Activated CD4-positive, alpha-beta T cell treated with anti-CD3 and anti-CD28 coated beads for 36 hours (primary cell): ENCODE measurements at regions of chr10 and their contacts with region 1.

Region 1: GRCh38 chr10:45580371-45581215 is 92.0 kb downstream of the ZFAND4 start:
- DNase-seq: peak; percentile 41
- ATAC-seq: peak; percentile 68
- H3K4me3 Mint-ChIP-seq: peak overlapping the region; percentile 76
- H3K27ac Mint-ChIP-seq: peak overlapping the region; percentile 95
- H3K4me1 Mint-ChIP-seq: peaks cover 37% of the 10 kb centered on the region
- H3K27me3 Mint-ChIP-seq: no peaks in the 10 kb centered on the region

Region 2: DNA sequence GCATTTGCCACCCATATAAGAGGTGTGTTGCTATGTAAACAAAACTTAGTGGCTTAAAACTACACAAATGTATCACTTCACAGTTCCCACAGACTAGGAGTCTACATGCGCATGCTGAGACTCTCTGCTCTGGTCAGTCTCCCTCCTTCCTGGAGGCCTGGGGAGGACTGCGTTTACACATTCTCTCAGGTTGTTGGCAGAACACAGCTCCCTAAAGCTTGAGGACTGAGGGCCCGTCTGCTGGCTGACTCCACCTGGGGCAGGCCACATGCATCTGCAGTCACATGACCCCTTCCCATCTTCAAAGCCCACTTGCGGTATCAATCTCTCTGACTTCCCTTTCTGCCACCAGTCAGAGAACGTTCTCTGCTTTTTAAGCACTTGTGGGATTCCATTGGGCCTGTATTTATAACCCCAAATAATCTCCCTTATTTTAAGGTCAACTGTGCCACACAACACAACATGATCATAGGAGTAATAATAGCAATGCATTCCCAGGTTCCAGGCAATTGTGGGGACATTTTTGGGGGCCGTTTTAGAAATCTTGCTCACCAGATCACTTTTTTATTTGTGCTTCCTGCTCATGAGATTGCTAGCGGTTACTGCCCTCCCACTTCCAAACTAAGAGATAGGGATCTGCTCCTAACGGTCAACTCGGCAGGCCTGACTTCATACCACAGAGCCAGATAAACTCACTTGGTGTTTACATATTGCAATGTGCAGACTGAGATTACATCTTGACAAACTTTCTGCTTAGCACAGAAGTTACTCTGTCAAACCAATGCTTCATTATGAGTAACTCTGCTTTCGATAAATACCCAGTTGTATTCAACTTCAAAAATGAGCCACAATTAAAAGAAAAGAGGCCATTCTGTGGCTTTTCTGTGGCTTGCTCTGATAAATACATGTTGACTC is 110.2 kb before region 1 on chr10:
- CTCF ChIA-PET with region 1: interaction called, 4 read pairs
- POLR2A ChIA-PET with region 1: no interaction called
- intact Hi-C with region 1: loop called in 1 of 2 experiments (anchors 5 kb)
- DNase-seq: peak; percentile 69
- ATAC-seq: peak; percentile 86
- H3K4me3 Mint-ChIP-seq: no peak overlapping the region
- H3K27ac Mint-ChIP-seq: peak overlapping the region; percentile 90
- H3K4me1 Mint-ChIP-seq: peaks cover 16% of the 10 kb centered on the region
- H3K27me3 Mint-ChIP-seq: no peaks in the 10 kb centered on the region

Region 3: DNA sequence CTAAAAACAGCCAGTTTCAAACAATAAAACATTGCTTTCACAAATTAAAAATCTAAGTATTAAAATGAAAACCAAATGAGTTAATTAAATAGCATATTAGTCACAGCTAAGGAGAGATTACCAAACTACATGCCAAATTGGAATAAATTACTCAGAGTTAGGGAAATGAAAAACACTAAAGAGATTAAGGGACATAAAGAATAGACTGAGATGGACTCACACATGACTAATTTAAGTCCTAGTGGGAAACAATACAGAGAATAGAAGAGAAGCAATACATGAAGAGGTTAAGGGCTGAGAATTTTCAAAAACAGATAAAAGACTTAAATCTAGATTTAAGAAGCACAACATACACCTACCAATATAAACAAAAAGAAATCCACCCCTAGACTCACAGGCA is 18.6 kb before region 1 on chr10:
- CTCF ChIA-PET with region 1: interaction called, 4 read pairs
- POLR2A ChIA-PET with region 1: interaction called, 3 read pairs
- intact Hi-C with region 1: loop called in 1 of 2 experiments (anchors 1 kb)
- DNase-seq: no peak
- ATAC-seq: peak; percentile 71
- H3K4me3 Mint-ChIP-seq: no peak overlapping the region
- H3K27ac Mint-ChIP-seq: no peak overlapping the region
- H3K4me1 Mint-ChIP-seq: peaks cover 35% of the 10 kb centered on the region
- H3K27me3 Mint-ChIP-seq: no peaks in the 10 kb centered on the region